ENCODE measurements at regions of chr7 and their contacts with region 1.

Region 1: DNA sequence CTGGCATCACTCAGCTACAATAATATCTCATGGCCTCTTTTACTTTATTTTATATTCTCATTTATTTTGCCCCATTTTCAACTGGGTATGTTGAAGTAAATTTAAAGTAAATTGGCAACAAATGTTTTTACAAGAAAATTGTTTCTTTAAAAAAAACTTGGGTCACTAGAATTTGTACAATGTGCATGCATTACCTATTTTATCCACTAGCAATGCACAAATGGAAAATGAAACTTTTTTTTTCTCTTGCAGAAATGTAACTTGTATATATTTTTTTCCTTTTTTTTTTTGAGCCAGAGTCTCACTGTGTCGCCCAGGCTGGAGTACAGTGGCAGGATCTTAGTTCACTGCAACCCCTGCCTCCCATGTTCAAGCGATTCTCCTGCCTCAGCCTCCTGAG is 10.3 kb upstream of the H2AZ2 start:
- DNase-seq: no peak
- ATAC-seq: no peak
- H3K4me3 ChIP-seq: no peak overlapping the region
- H3K27ac ChIP-seq: no peak overlapping the region
- H3K4me1 ChIP-seq: peaks cover 3 to 31% of the 10 kb centered on the region in 2 experiments; a peak in 3 of 4 replicates
- H3K27me3 ChIP-seq: no peaks in the 10 kb centered on the region
- CTCF ChIP-seq: peak in 2 of 3 experiments; percentile 8 to 22; a peak in 1 of 6 replicates
- POLR2A ChIP-seq: no peak
- RAD21 ChIP-seq: no peak

Region 2: GRCh38 chr7:44706788-44707560 is 151.2 kb before region 1 on chr7:
- CTCF ChIA-PET with region 1: no interaction called
- POLR2A ChIA-PET with region 1: no interaction called
- RAD21 ChIA-PET with region 1: no interaction called
- intact Hi-C with region 1: no loop called
- DNase-seq: no peak
- ATAC-seq: no peak
- H3K4me3 ChIP-seq: no peak overlapping the region
- H3K27ac ChIP-seq: no peak overlapping the region
- H3K4me1 ChIP-seq: peaks cover 0 to 22% of the 10 kb centered on the region in 2 experiments; a peak in 2 of 4 replicates
- H3K27me3 ChIP-seq: no peaks in the 10 kb centered on the region
- CTCF ChIP-seq: no peak
- POLR2A ChIP-seq: no peak
- RAD21 ChIP-seq: no peak

Region 3: GRCh38 chr7:44921607-44922359 is 63.6 kb after region 1 on chr7:
- CTCF ChIA-PET with region 1: interaction called, 3 read pairs
- POLR2A ChIA-PET with region 1: no interaction called
- RAD21 ChIA-PET with region 1: interaction called in 1 of 2 experiments, 4 read pairs
- intact Hi-C with region 1: loop called (anchors 2 kb)
- DNase-seq: peak; percentile 59
- ATAC-seq: peak; percentile 98
- H3K4me3 ChIP-seq: no peak overlapping the region
- H3K27ac ChIP-seq: no peak overlapping the region
- H3K4me1 ChIP-seq: peaks cover 0 to 6% of the 10 kb centered on the region in 2 experiments; a peak in 1 of 4 replicates
- H3K27me3 ChIP-seq: no peaks in the 10 kb centered on the region
- CTCF ChIP-seq: peak; percentile 65 to 89 (median 86)
- POLR2A ChIP-seq: no peak
- RAD21 ChIP-seq: peak; percentile 88

Region 4: DNA sequence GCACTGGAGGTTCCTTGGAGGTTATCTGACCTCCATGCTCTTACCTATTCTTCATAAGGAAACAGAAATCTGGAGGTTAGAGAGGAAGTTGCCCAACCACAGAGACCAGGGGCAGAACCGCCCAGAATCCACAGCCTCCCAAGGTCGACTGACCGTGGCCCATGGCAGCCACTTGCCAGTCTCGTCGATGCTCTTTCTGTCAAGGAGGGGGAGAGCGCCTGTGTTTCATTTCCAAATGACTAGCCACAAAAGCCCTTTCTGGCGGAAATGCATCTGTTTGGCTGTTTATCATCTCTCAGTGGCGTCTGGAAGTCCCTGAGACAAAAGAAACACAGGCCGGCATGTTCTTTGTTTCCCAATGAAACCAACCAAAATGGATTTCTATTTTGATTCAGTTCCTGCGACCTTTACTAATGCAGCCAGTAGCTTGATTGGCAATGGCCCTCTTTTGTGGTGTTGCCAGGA is 302.3 kb after region 1 on chr7:
- CTCF ChIA-PET with region 1: no interaction called
- POLR2A ChIA-PET with region 1: no interaction called
- RAD21 ChIA-PET with region 1: no interaction called
- intact Hi-C with region 1: no loop called
- DNase-seq: no peak
- ATAC-seq: no peak
- H3K4me3 ChIP-seq: no peak overlapping the region
- H3K27ac ChIP-seq: no peak overlapping the region
- H3K4me1 ChIP-seq: no peaks in the 10 kb centered on the region
- H3K27me3 ChIP-seq: no peaks in the 10 kb centered on the region
- CTCF ChIP-seq: no peak
- POLR2A ChIP-seq: no peak
- RAD21 ChIP-seq: no peak